ENCODE measurements at regions of chr7 and their contacts with region 1.

Region 1: GRCh38 chr7:66920769-66921395 is at the start of gene TMEM248:
- DNase-seq: peak; percentile 93
- total RNA-seq, gene TMEM248: 50.2 TPM

Region 2: GRCh38 chr7:66628361-66629140 is 292.3 kb before region 1 on chr7 and contains the start of gene KCTD7:
- intact Hi-C with region 1: loop called (anchors 10 kb)
- DNase-seq: peak; percentile 99
- total RNA-seq, gene KCTD7: 9.7 TPM

Region 3: GRCh38 chr7:66740302-66740979 is 180.4 kb before region 1 on chr7 and contains the start of gene RABGEF1:
- intact Hi-C with region 1: loop called (anchors 10 kb)
- DNase-seq: peak; percentile 99
- total RNA-seq, gene RABGEF1: 19.1 TPM

Region 4: DNA sequence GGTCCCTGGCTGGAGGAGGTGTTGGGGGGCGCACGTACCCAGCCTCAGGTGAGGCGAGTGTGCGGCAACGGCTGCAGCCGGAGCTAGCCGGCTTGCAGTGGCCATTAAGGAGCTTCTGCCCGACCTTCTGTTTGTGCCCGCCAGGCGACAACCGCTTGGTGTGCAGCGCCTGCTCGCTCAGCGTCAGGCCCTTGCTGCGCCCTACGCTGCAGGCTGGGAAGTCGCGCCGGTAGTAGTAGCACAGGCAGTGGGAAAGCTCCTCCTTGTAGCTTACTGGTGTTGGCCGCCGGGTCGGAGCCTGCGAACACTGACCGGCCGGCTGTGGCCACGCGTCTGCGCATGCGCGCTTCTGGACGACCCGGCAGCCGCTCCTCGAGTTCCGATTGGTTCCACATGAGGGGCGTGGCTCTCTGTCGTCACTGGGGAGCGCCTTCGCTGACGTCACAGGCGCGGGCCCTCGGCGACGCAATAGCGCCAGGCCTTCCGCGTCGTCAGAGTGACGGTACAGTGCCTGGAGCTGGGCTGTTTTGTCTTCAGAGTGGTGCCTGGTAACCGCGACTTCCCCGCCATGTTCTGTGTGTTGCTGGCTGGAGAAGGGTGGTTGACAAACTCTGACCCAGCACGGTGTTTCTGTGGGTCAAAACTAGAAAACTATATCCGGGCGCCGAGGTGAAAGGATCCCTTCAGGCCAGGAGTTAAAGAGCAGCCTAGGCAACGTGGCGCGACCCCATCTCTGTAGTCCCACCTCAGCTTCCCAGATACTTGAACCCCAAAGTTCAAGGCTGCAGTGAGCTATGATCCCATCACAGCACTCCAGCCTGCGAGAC is 76.1 kb before region 1 on chr7:
- intact Hi-C with region 1: loop called (anchors 5 kb)
- DNase-seq: peak; percentile 98